Mammary epithelial cell (primary cell): ENCODE measurements at regions of chrX and their contacts with region 1.

Region 1: GRCh38 chrX:64152857-64153256 is 52.7 kb downstream of the AMER1 start:
- DNase-seq: no peak
- H3K4me3 ChIP-seq: no peak overlapping the region
- H3K27ac ChIP-seq: no peak overlapping the region
- H3K4me1 ChIP-seq: no peaks in the 10 kb centered on the region
- H3K27me3 ChIP-seq: no peaks in the 10 kb centered on the region
- CTCF ChIP-seq: no peak

Region 2: GRCh38 chrX:63761639-63762038 is 391.2 kb before region 1 on chrX:
- CTCF ChIA-PET with region 1: no interaction called
- dilution Hi-C with region 1: no loop called
- in situ Hi-C with region 1: no loop called
- intact Hi-C with region 1: no loop called
- DNase-seq: no peak
- H3K4me3 ChIP-seq: no peak overlapping the region
- H3K27ac ChIP-seq: no peak overlapping the region
- H3K4me1 ChIP-seq: no peaks in the 10 kb centered on the region
- H3K27me3 ChIP-seq: no peaks in the 10 kb centered on the region
- CTCF ChIP-seq: peak; percentile 16 to 23

Region 3: GRCh38 chrX:64191281-64192010 is 38.6 kb after region 1 on chrX:
- CTCF ChIA-PET with region 1: no interaction called
- dilution Hi-C with region 1: loop called (anchors 5 kb)
- in situ Hi-C with region 1: no loop called
- intact Hi-C with region 1: no loop called
- DNase-seq: no peak
- H3K4me3 ChIP-seq: no peak overlapping the region
- H3K27ac ChIP-seq: no peak overlapping the region
- H3K4me1 ChIP-seq: no peaks in the 10 kb centered on the region
- H3K27me3 ChIP-seq: no peaks in the 10 kb centered on the region
- CTCF ChIP-seq: no peak